H1 (cell line): ENCODE measurements at regions of chr13 and their contacts with region 1.

Region 1: GRCh38 chr13:98761126-98761985 is 8.9 kb upstream of the SLC15A1 start:
- DNase-seq: no peak
- H3K4me3 ChIP-seq: no peak overlapping the region
- H3K27ac ChIP-seq: no peak overlapping the region
- H3K4me1 ChIP-seq: peaks cover 0 to 4% (median 1%) of the 10 kb centered on the region in 4 experiments; a peak in 2 of 7 replicates
- H3K27me3 ChIP-seq: no peaks in the 10 kb centered on the region; a peak in 1 of 7 replicates
- CTCF ChIP-seq: no peak
- EP300 ChIP-seq: no peak
- POLR2A ChIP-seq: no peak
- RAD21 ChIP-seq: no peak

Region 2: DNA sequence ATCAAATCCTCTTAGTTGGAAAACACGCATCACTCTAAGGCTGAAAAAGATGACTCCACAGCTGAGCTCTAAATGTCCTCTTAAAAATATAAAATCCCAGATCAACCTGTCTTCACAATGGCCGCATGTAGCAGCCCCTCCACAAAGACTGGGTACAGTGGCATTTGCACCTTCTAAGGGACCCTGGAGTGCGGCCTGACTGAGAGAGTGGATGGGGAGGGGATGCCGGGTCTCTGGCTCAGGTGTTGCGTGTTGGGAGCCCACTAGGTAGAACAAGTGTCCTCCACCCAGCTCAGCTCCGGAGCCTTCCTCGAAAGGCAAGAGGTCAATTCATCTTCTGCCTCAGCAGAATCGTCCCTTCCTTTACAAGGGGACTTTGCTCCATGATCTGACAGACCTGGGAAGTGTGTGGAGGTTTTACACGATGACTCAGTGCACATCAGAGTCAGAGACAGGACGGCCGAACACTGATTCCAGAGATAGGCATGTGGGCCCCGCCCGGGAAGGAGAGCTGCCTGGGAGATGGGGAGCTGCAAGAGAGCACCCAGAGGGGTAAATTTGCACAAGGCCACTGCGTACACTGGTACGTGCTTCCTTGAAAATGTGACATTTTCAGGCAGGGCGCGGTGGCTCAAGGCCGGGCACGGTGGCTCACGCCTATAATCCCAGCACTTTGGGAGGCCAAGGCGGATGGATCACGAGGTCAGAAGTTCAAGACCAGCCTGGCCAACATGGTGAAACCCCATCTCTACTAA is 14.7 kb after region 1 on chr13:
- CTCF ChIA-PET with region 1: interaction called, 37 read pairs
- POLR2A ChIA-PET with region 1: no interaction called
- DNase-seq: no peak
- H3K4me3 ChIP-seq: no peak overlapping the region
- H3K27ac ChIP-seq: no peak overlapping the region
- H3K4me1 ChIP-seq: no peaks in the 10 kb centered on the region; a peak in 1 of 7 replicates
- H3K27me3 ChIP-seq: no peaks in the 10 kb centered on the region
- CTCF ChIP-seq: no peak
- EP300 ChIP-seq: no peak
- POLR2A ChIP-seq: no peak
- RAD21 ChIP-seq: no peak